ENCODE measurements at regions of chr7 and their contacts with region 1.

Region 1: GRCh38 chr7:116671681-116672595 is at the start of gene MET:
- DNase-seq: peak; percentile 68 to 77
- ATAC-seq: peak; percentile 86 to 95 (median 92)
- H3K4me3 ChIP-seq: peak within 1 kb of the TSS; percentile 41 to 69 (median 64)
- H3K27ac ChIP-seq: peak within 1 kb of the TSS; percentile 43 to 86 (median 78)
- H3K4me1 ChIP-seq: peaks cover 0 to 48% (median 14%) of the 10 kb centered on the region in 9 donors
- H3K27me3 ChIP-seq: peaks cover 0 to 60% (median 0%) of the 10 kb centered on the region in 7 donors
- CTCF ChIP-seq: peak; percentile 19 to 71 (median 54)
- total RNA-seq, gene MET: 11.0 to 23.3 (median 15.6) TPM

Region 2: GRCh38 chr7:116598278-116598677 is 73.7 kb before region 1 on chr7:
- intact Hi-C with region 1: loop called in 4 of 10 experiments (anchors 2 to 5 kb)
- DNase-seq: no peak
- ATAC-seq: peak in 1 of 8 donors; percentile 44
- H3K4me3 ChIP-seq: no peak overlapping the region
- H3K27ac ChIP-seq: no peak overlapping the region
- H3K4me1 ChIP-seq: peaks cover 0 to 2% (median 0%) of the 10 kb centered on the region in 9 donors
- H3K27me3 ChIP-seq: peaks cover 0 to 6% (median 0%) of the 10 kb centered on the region in 7 donors
- CTCF ChIP-seq: peak in 7 of 9 donors; percentile 15 to 47 (median 30)

Region 3: GRCh38 chr7:116786791-116787443 is 115.0 kb after region 1 on chr7:
- intact Hi-C with region 1: loop called in 2 of 10 experiments (anchors 10 kb)
- DNase-seq: peak in 1 of 2 donors; percentile 19
- ATAC-seq: peak in 2 of 8 donors; percentile 50 to 51
- H3K4me3 ChIP-seq: no peak overlapping the region
- H3K27ac ChIP-seq: no peak overlapping the region
- H3K4me1 ChIP-seq: peaks cover 0 to 8% (median 0%) of the 10 kb centered on the region in 9 donors
- H3K27me3 ChIP-seq: no peaks in the 10 kb centered on the region
- CTCF ChIP-seq: peak in 7 of 9 donors; percentile 20 to 56 (median 44)

Region 4: GRCh38 chr7:116802746-116803152 is 130.8 kb after region 1 on chr7:
- intact Hi-C with region 1: loop called in 6 of 10 experiments (anchors 5 kb)
- DNase-seq: peak in 1 of 2 donors; percentile 26
- ATAC-seq: peak in 3 of 8 donors; percentile 8 to 39 (median 39)
- H3K4me3 ChIP-seq: no peak overlapping the region
- H3K27ac ChIP-seq: no peak overlapping the region
- H3K4me1 ChIP-seq: peaks cover 0 to 27% (median 7%) of the 10 kb centered on the region in 9 donors
- H3K27me3 ChIP-seq: no peaks in the 10 kb centered on the region
- CTCF ChIP-seq: peak; percentile 11 to 65 (median 43)

Region 5: DNA sequence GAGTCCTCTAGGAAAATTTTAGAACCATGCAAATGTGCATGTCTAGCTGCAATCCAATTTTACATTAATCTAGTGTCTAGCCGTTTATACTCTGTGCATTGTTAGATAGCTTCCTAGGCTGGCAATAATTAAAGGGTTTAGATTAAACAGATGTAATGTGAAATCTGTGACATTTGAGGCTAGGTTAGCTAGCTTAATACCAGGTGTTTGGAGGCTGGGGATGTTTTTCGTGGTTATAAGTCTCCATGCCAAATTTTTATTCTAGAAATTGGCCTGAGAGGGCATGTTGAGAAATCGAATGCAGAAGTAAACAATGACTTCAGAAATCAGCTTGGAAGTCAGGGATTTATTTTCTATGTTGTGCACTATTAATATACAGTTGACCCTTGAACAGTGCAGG is 375.6 kb after region 1 on chr7:
- intact Hi-C with region 1: no loop called
- DNase-seq: no peak
- ATAC-seq: peak in 1 of 8 donors; percentile 6
- H3K4me3 ChIP-seq: no peak overlapping the region
- H3K27ac ChIP-seq: no peak overlapping the region
- H3K4me1 ChIP-seq: peaks cover 7 to 72% (median 41%) of the 10 kb centered on the region in 9 donors
- H3K27me3 ChIP-seq: no peaks in the 10 kb centered on the region
- CTCF ChIP-seq: no peak

Measured in heart right ventricle (tissue), 16 donors.